Posterior vena cava (tissue), 2 donors: ENCODE measurements at regions of chr1 and their contacts with region 1.

Region 1: GRCh38 chr1:22808676-22809483 is 98.2 kb downstream of the EPHB2 start:
- DNase-seq: peak; percentile 91

Region 2: GRCh38 chr1:21270086-21270689 is 1538.7 kb before region 1 on chr1:
- intact Hi-C with region 1: loop called in 1 of 2 experiments (anchors 5 kb)
- DNase-seq: peak; percentile 93

Region 3: DNA sequence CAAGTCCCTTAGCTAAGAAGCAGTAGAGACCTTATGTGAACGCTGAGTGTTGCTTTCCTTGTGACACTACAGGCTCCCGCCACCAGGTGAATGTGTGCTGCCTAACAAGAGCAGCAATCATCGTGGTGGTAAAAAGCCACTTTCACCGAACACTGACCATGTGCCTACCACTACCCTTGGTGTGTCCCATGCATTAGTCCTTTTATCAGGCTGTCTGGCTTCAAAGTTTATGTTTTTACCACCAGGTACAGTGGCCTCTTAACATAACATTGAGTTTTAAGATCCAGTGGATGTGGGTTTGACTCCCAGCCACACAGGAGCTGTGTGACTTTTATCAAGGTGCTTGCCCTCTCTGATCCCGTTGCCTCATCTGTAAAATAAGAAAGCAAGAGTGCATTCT is 154.2 kb before region 1 on chr1:
- intact Hi-C with region 1: no loop called
- DNase-seq: no peak

Region 4: GRCh38 chr1:22702296-22703085 is 106.4 kb before region 1 on chr1:
- intact Hi-C with region 1: no loop called
- DNase-seq: no peak

Region 5: GRCh38 chr1:22788254-22788661 is 20.6 kb before region 1 on chr1:
- intact Hi-C with region 1: loop called in 1 of 2 experiments (anchors 1 kb)
- DNase-seq: no peak